CD4-positive, alpha-beta memory T cell (primary cell): ENCODE measurements at regions of chr14 and their contacts with region 1.

Region 1: DNA sequence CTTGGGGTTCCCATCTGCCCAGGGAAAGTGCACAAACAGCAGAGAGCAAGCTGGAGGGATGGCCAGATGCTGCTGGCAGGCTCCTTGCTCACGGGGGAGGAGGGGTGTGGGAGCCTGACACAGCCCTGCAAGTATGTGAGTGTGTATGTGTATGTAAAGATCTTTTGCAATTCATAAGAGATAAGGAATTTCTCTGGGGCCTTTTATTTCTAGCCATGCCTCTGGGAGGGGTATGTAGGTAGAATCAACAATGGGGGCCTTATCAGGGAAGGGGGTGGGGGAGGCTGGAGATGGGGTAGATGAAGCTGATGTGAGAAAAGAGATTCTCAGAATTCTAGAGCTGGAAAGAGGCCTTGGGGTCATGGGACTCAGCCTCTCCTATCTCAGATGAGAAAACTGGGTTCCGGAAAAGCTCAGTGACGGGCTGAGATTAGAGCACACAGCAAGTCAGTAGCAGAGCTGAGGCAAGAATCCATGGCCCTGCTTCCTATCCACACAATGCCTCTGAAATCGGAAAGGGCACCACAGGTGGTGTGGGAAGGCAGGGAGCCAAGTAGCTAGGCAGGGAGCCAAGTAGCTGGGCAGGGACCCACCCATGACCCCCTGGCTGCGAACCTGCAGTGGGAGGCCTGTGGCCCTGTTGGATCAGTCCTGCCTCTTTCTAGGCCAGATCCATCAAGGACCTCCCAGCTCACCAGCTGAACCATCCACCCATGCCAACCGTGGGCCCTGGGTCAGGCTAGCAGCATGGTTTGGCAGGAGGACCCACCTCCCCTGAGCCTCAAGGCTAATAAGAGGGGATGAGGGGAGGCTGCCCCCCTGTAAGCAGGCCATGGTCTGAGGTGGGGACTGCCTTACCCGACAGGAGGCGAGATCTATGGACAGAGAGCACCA is 54.7 kb downstream of the PLEKHG3 start:
- DNase-seq: peak in 1 of 5 donors; percentile 26
- H3K4me3 ChIP-seq: no peak overlapping the region
- H3K4me3 Mint-ChIP-seq: peak overlapping the region in 7 of 8 donors; percentile 6 to 74 (median 40)
- H3K27ac ChIP-seq: peak overlapping the region; percentile 58
- H3K27ac Mint-ChIP-seq: peak overlapping the region; percentile 85 to 98 (median 95)
- H3K4me1 ChIP-seq: peaks cover 98% of the 10 kb centered on the region
- H3K4me1 Mint-ChIP-seq: peaks cover 70 to 100% (median 87%) of the 10 kb centered on the region in 4 donors
- H3K27me3 ChIP-seq: no peaks in the 10 kb centered on the region
- H3K27me3 Mint-ChIP-seq: no peaks in the 10 kb centered on the region

Region 2: GRCh38 chr14:64510825-64511671 is 247.9 kb before region 1 on chr14:
- CTCF ChIA-PET with region 1: no interaction called
- POLR2A ChIA-PET with region 1: no interaction called
- intact Hi-C with region 1: no loop called
- DNase-seq: peak; percentile 65 to 72 (median 69)
- H3K4me3 ChIP-seq: no peak overlapping the region
- H3K4me3 Mint-ChIP-seq: peak overlapping the region in 7 of 8 donors; percentile 12 to 93 (median 65)
- H3K27ac ChIP-seq: peak overlapping the region; percentile 59
- H3K27ac Mint-ChIP-seq: peak overlapping the region; percentile 54 to 94 (median 88)
- H3K4me1 ChIP-seq: peaks cover 92% of the 10 kb centered on the region
- H3K4me1 Mint-ChIP-seq: peaks cover 62 to 93% (median 81%) of the 10 kb centered on the region in 4 donors
- H3K27me3 ChIP-seq: no peaks in the 10 kb centered on the region
- H3K27me3 Mint-ChIP-seq: no peaks in the 10 kb centered on the region

Region 3: GRCh38 chr14:64688811-64689281 is 70.1 kb before region 1 on chr14:
- CTCF ChIA-PET with region 1: interaction called, 14 read pairs
- POLR2A ChIA-PET with region 1: interaction called, 8 read pairs
- intact Hi-C with region 1: loop called (anchors 5 kb)
- DNase-seq: peak in 1 of 5 donors; percentile 48
- H3K4me3 ChIP-seq: no peak overlapping the region
- H3K4me3 Mint-ChIP-seq: peak overlapping the region in 7 of 8 donors; percentile 52 to 77 (median 71)
- H3K27ac ChIP-seq: no peak overlapping the region
- H3K27ac Mint-ChIP-seq: peak overlapping the region in 6 of 7 donors; percentile 49 to 87 (median 70)
- H3K4me1 ChIP-seq: peaks cover 29% of the 10 kb centered on the region
- H3K4me1 Mint-ChIP-seq: peaks cover 31 to 64% (median 44%) of the 10 kb centered on the region in 4 donors
- H3K27me3 ChIP-seq: no peaks in the 10 kb centered on the region
- H3K27me3 Mint-ChIP-seq: no peaks in the 10 kb centered on the region

Region 4: DNA sequence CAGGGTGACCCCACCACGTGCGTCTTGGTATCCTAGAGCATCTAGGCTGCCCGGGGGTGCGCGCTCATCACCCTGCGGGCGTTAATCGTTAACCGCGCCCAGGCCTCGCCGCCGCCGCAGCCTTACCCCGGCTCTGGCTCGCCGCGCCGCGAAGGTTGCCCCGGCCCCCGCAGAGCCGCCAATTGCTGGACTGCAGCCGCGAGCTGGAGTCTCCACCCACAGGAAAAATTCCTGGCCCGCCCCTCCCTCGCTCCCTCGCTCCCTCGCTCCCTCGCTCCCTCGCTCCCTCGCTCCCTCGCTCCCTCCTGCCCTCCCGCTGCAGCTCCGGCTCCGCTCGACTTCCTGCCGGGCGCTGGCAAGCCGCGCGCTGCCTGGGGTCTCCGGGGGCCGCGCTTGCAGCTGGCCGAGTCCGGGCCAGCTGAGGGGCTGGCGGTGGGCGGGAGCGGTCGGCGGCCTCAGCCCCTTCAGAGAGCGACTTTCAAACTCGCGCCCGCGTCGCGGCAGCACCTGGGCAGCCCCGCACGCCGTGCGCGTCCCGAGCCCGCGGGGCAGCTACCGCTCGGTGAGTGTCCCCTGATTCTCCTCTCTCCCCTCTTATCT is 54.7 kb before region 1 on chr14 and contains the start of gene PLEKHG3:
- CTCF ChIA-PET with region 1: interaction called, 17 read pairs
- POLR2A ChIA-PET with region 1: interaction called, 108 read pairs
- intact Hi-C with region 1: loop called (anchors 1 kb)
- DNase-seq: peak in 4 of 5 donors; percentile 35 to 76 (median 42)
- H3K4me3 ChIP-seq: peak within 1 kb of the TSS; percentile 57 to 74
- H3K4me3 Mint-ChIP-seq: peak within 1 kb of the TSS; percentile 90 to 95 (median 94)
- H3K27ac ChIP-seq: peak within 1 kb of the TSS; percentile 80
- H3K27ac Mint-ChIP-seq: peak within 1 kb of the TSS; percentile 86 to 98 (median 93)
- H3K4me1 ChIP-seq: peaks cover 80% of the 10 kb centered on the region
- H3K4me1 Mint-ChIP-seq: peaks cover 42 to 83% (median 58%) of the 10 kb centered on the region in 4 donors
- H3K27me3 ChIP-seq: no peaks in the 10 kb centered on the region
- H3K27me3 Mint-ChIP-seq: no peaks in the 10 kb centered on the region
- total RNA-seq, gene PLEKHG3: 53.3 to 56.5 TPM

Region 5: DNA sequence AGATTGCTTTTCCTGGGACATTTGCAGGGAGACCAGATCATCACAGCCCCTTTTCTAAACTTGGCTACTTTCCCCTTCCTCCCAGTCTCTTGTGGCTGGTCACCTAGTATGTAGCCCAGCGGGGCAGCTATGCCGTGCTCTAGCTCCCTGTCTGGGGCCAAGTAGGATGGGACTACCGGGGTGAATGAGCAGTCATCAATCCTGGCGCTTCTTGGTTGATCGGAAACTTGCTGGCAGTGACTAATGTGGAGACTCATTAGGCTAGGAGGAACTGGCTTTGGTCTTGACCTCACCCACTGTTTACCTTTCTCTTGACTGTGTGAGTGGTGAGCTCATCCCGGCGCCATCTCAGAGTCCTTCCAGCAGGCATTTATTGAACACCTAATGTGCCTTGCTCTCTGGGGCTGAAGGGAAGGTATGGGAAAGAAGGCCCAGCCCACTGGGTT is 38.8 kb before region 1 on chr14:
- CTCF ChIA-PET with region 1: interaction called, 8 read pairs
- POLR2A ChIA-PET with region 1: interaction called, 19 read pairs
- intact Hi-C with region 1: loop called (anchors 5 kb)
- DNase-seq: no peak
- H3K4me3 ChIP-seq: no peak overlapping the region
- H3K4me3 Mint-ChIP-seq: peak overlapping the region in 7 of 8 donors; percentile 40 to 77 (median 65)
- H3K27ac ChIP-seq: peak overlapping the region; percentile 1
- H3K27ac Mint-ChIP-seq: peak overlapping the region; percentile 78 to 97 (median 92)
- H3K4me1 ChIP-seq: peaks cover 100% of the 10 kb centered on the region
- H3K4me1 Mint-ChIP-seq: peaks cover 77 to 100% (median 91%) of the 10 kb centered on the region in 4 donors
- H3K27me3 ChIP-seq: no peaks in the 10 kb centered on the region
- H3K27me3 Mint-ChIP-seq: no peaks in the 10 kb centered on the region

Region 6: DNA sequence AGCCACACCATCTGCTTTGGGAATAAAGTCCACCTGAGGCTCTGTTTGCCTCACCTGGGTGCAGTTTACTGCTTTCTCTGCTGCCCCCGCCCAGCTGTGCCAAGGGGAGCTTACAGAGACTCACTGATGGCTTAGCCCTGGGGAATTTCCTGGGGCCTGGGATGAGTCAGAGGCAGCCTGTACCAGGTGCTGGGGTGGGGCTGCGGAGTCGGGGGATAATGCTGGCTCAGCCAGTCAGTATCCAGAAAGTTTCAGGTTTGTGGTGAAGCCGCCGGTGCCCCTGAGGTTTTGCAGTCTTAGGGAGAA is 32.4 kb before region 1 on chr14:
- CTCF ChIA-PET with region 1: interaction called, 8 read pairs
- POLR2A ChIA-PET with region 1: interaction called, 19 read pairs
- intact Hi-C with region 1: loop called (anchors 5 kb)
- DNase-seq: peak in 2 of 5 donors; percentile 39 to 88
- H3K4me3 ChIP-seq: no peak overlapping the region
- H3K4me3 Mint-ChIP-seq: peak overlapping the region in 7 of 8 donors; percentile 26 to 84 (median 62)
- H3K27ac ChIP-seq: peak overlapping the region; percentile 55
- H3K27ac Mint-ChIP-seq: peak overlapping the region; percentile 65 to 97 (median 92)
- H3K4me1 ChIP-seq: peaks cover 96% of the 10 kb centered on the region
- H3K4me1 Mint-ChIP-seq: peaks cover 78 to 100% (median 88%) of the 10 kb centered on the region in 4 donors
- H3K27me3 ChIP-seq: no peaks in the 10 kb centered on the region
- H3K27me3 Mint-ChIP-seq: no peaks in the 10 kb centered on the region

Region 7: DNA sequence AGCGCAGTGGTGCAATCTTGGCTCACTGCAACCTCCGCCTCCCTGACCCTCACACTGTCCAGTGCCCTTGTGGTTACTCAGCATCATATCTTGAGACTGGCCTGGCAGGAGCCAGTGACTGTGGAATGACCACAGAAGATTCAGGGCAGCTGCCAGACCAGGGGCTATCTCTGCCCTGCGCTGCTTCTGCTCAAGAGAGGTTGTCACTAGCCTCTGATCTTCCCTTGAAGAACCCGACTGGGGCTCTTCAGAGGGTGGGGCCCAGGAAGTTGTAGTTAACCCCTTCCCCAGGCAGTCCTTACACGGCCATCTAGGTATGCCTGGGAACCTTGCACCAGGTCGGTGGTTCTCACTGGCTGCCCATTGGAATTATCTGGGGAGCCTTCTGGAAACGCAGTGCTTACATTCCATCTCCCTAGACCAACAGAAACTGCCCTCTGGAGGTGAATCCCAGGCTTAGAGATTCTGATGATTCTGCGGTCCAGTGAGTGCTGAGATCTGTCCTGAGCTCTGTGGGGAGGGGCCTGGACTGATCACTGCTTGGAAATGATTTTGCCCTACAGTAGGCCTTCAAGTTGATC is 13.3 kb before region 1 on chr14:
- CTCF ChIA-PET with region 1: interaction called, 11 read pairs
- POLR2A ChIA-PET with region 1: interaction called, 11 read pairs
- intact Hi-C with region 1: no loop called
- DNase-seq: no peak
- H3K4me3 ChIP-seq: no peak overlapping the region
- H3K4me3 Mint-ChIP-seq: peak overlapping the region in 7 of 8 donors; percentile 12 to 75 (median 43)
- H3K27ac ChIP-seq: peak overlapping the region; percentile 28
- H3K27ac Mint-ChIP-seq: peak overlapping the region; percentile 71 to 93 (median 85)
- H3K4me1 ChIP-seq: peaks cover 29% of the 10 kb centered on the region
- H3K4me1 Mint-ChIP-seq: peaks cover 30 to 52% (median 38%) of the 10 kb centered on the region in 4 donors
- H3K27me3 ChIP-seq: no peaks in the 10 kb centered on the region
- H3K27me3 Mint-ChIP-seq: no peaks in the 10 kb centered on the region

Region 8: GRCh38 chr14:65015391-65015790 is 256.5 kb after region 1 on chr14:
- CTCF ChIA-PET with region 1: no interaction called
- POLR2A ChIA-PET with region 1: no interaction called
- intact Hi-C with region 1: no loop called
- DNase-seq: no peak
- H3K4me3 ChIP-seq: no peak overlapping the region
- H3K4me3 Mint-ChIP-seq: no peak overlapping the region
- H3K27ac ChIP-seq: no peak overlapping the region
- H3K27ac Mint-ChIP-seq: peak overlapping the region in 2 of 7 donors; percentile 17 to 69
- H3K4me1 ChIP-seq: no peaks in the 10 kb centered on the region
- H3K4me1 Mint-ChIP-seq: peaks cover 0 to 4% (median under 1%) of the 10 kb centered on the region in 4 donors
- H3K27me3 ChIP-seq: no peaks in the 10 kb centered on the region
- H3K27me3 Mint-ChIP-seq: no peaks in the 10 kb centered on the region

Region 9: GRCh38 chr14:65102441-65103149 is 343.7 kb after region 1 on chr14 and contains the start of gene MAX:
- CTCF ChIA-PET with region 1: no interaction called
- POLR2A ChIA-PET with region 1: no interaction called
- intact Hi-C with region 1: loop called (anchors 5 kb)
- DNase-seq: peak; percentile 98 to 100 (median 100)
- H3K4me3 ChIP-seq: peak within 1 kb of the TSS; percentile 77 to 100
- H3K4me3 Mint-ChIP-seq: peak within 1 kb of the TSS; percentile 91 to 100 (median 96)
- H3K27ac ChIP-seq: peak within 1 kb of the TSS; percentile 96
- H3K27ac Mint-ChIP-seq: peak within 1 kb of the TSS; percentile 92 to 99 (median 97)
- H3K4me1 ChIP-seq: peaks cover 41% of the 10 kb centered on the region
- H3K4me1 Mint-ChIP-seq: peaks cover 24 to 49% (median 35%) of the 10 kb centered on the region in 4 donors
- H3K27me3 ChIP-seq: no peaks in the 10 kb centered on the region
- H3K27me3 Mint-ChIP-seq: peaks cover 2 to 3% of the 10 kb centered on the region in 2 donors
- total RNA-seq, gene MAX: 188 to 212 TPM

Region 10: DNA sequence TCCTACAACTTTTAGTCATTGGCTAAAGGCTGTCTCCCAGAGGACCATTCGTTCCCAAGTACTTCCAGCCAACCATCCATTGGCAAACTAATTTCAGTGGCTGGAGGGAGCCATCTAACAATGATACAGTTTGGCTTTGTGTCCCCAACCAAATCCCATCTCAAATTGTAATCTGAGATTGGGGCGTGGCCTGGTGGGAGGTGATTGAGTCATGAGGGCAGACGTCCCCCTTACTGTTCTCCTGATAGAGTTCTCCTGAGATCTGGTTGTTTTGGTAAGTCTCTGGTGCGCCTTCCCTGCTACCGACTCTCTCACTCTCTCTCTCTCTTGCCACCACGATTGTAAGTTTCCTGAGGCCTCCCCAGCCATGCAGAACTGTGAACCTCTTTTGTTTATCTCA is 553.9 kb after region 1 on chr14:
- CTCF ChIA-PET with region 1: no interaction called
- POLR2A ChIA-PET with region 1: no interaction called
- intact Hi-C with region 1: no loop called
- DNase-seq: no peak
- H3K4me3 ChIP-seq: no peak overlapping the region
- H3K4me3 Mint-ChIP-seq: no peak overlapping the region
- H3K27ac ChIP-seq: no peak overlapping the region
- H3K27ac Mint-ChIP-seq: no peak overlapping the region
- H3K4me1 ChIP-seq: no peaks in the 10 kb centered on the region
- H3K4me1 Mint-ChIP-seq: peaks cover 0 to 10% (median 2%) of the 10 kb centered on the region in 4 donors
- H3K27me3 ChIP-seq: no peaks in the 10 kb centered on the region
- H3K27me3 Mint-ChIP-seq: no peaks in the 10 kb centered on the region